Right ventricle myocardium inferior (tissue), 1 donor: ENCODE measurements at regions of chr1 and their contacts with region 1.

Region 1: DNA sequence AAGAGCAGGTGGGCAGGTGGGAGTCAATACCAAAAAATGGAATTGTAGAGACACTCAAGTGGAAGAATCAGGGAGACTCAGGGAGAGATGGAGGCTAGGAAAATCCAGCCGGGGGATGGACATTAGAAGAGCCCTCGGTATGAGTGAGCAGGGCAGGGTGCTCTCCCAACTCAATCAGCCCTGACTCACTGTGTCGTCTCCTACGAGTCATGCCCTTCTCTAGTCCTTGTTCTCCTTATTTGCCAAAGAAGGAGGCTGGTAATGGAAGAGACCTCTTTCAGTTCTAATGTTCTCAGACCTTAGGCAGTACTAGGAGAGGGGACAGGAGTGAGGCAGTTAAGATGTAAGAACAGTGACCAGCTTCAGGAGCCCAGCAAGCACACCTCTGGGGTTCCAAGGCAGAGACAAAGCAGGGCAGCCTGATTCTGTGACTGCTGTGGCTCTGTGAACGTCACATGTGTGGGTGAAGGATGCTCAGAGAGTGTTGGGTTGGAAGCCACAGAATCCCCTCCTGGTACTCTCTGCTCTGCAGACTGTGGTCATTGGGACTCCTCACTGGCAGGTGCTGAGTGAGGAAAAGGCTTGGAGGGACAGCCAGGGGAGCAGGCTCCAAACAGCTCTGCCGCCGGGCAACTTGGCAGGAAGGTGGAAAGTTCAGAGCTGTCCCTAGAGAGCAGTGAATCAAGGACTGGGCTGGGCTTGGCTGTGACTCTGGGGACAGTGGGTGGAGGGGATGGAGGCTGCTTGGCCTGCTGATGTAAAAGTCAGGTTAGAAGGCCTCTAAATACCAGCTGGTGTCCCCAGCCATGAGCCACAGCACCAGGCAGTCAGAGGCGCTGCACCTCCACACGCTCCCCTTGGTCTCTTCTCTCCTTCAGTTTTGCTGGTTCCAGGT is 11.1 kb upstream of the GJA5 start:
- DNase-seq: peak; percentile 79
- ATAC-seq: peak; percentile 96

Region 2: GRCh38 chr1:147729315-147729714 is 42.2 kb before region 1 on chr1:
- intact Hi-C with region 1: loop called (anchors 2 kb)
- DNase-seq: no peak
- ATAC-seq: no peak

Region 3: GRCh38 chr1:147748676-147749350 is 22.7 kb before region 1 on chr1:
- intact Hi-C with region 1: loop called (anchors 1 kb)
- DNase-seq: peak; percentile 66
- ATAC-seq: peak; percentile 96

Region 4: DNA sequence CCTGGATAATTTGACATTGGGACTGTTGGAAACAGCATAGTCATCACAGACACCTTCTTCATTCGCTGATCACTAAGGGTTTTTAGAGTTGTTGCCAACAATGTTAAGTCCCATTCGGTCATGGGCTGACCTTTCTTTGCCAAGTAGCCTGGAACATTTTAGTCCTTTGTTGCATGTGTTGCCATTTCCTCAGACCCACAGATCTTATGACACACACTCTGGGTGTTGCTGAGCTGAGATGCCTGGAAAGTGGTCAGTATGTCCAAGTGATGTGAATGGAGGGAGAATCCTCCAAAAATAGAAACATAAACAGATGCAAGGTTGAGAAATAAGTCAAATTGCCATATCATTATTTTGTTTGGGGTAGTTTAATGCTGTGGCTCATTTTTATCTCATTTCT is 50.4 kb after region 1 on chr1:
- intact Hi-C with region 1: loop called (anchors 5 kb)
- DNase-seq: no peak
- ATAC-seq: peak; percentile 96